ENCODE measurements at regions of chr1 and their contacts with region 1.

Region 1: GRCh38 chr1:229753764-229754551 is 127.9 kb downstream of the URB2 start:
- DNase-seq: no peak
- H3K4me3 ChIP-seq: no peak overlapping the region
- H3K27ac ChIP-seq: no peak overlapping the region
- H3K4me1 ChIP-seq: peaks cover 20% of the 10 kb centered on the region
- H3K27me3 ChIP-seq: no peaks in the 10 kb centered on the region
- CTCF ChIP-seq: no peak

Region 2: DNA sequence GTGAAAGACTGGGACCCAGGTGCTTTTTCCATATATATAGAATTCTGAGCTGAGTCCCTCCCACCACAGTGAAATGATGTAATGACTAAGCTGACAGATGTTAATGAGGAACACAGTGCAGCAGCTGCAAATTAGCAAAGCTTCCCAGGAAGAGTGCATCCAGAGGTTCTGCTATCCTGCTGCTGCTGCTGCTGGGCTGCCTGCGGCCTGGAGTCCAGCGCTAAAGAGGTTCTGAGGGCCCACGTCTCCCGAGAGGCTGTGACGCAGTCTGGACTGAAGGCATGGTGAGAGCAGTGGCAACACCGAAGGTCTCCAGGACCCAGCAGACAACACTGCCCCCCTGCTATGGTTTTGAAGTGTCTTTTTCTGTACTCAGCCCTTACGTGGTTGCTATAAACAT is 64.1 kb before region 1 on chr1:
- CTCF ChIA-PET with region 1: no interaction called
- dilution Hi-C with region 1: loop called (anchors 5 kb)
- in situ Hi-C with region 1: no loop called
- intact Hi-C with region 1: no loop called
- DNase-seq: no peak
- H3K4me3 ChIP-seq: no peak overlapping the region
- H3K27ac ChIP-seq: no peak overlapping the region
- H3K4me1 ChIP-seq: no peaks in the 10 kb centered on the region
- H3K27me3 ChIP-seq: peaks cover 2% of the 10 kb centered on the region
- CTCF ChIP-seq: no peak

Region 3: GRCh38 chr1:229803626-229804217 is 49.8 kb after region 1 on chr1:
- CTCF ChIA-PET with region 1: no interaction called
- dilution Hi-C with region 1: no loop called
- in situ Hi-C with region 1: no loop called
- intact Hi-C with region 1: no loop called
- DNase-seq: peak; percentile 21
- H3K4me3 ChIP-seq: no peak overlapping the region
- H3K27ac ChIP-seq: no peak overlapping the region
- H3K4me1 ChIP-seq: no peaks in the 10 kb centered on the region
- H3K27me3 ChIP-seq: no peaks in the 10 kb centered on the region
- CTCF ChIP-seq: no peak

Measured in mammary epithelial cell (primary cell).